Mammary epithelial cell (primary cell): ENCODE measurements at regions of chr14 and their contacts with region 1.

Region 1: GRCh38 chr14:73392329-73393257 is 65.8 kb downstream of the NUMB start:
- DNase-seq: no peak
- H3K4me3 ChIP-seq: no peak overlapping the region
- H3K27ac ChIP-seq: no peak overlapping the region
- H3K4me1 ChIP-seq: no peaks in the 10 kb centered on the region
- H3K27me3 ChIP-seq: no peaks in the 10 kb centered on the region
- CTCF ChIP-seq: no peak

Region 2: DNA sequence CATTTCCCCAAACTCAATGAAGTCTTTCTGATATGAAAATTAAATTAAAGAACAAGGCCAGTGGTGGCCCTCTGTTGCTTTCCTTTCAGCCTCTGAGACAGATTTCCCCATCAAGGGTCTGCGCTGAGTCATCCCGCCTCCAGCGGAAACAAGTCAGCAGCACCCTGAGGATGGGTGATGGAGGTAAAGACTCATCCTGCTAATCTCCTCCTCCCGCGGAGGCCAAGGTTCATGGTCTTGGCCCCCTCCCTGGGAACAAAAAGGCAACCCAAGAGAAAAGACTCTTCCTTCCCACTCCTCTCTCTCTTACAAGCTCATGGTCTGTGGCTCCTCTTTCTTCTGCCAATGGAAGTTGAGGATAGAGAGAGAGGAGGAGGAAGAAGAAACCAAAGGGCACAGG is 74.8 kb after region 1 on chr14:
- CTCF ChIA-PET with region 1: no interaction called
- dilution Hi-C with region 1: loop called (anchors 5 kb)
- in situ Hi-C with region 1: no loop called
- intact Hi-C with region 1: no loop called
- DNase-seq: no peak
- H3K4me3 ChIP-seq: no peak overlapping the region
- H3K27ac ChIP-seq: no peak overlapping the region
- H3K4me1 ChIP-seq: peaks cover 27% of the 10 kb centered on the region
- H3K27me3 ChIP-seq: no peaks in the 10 kb centered on the region
- CTCF ChIP-seq: no peak

Region 3: DNA sequence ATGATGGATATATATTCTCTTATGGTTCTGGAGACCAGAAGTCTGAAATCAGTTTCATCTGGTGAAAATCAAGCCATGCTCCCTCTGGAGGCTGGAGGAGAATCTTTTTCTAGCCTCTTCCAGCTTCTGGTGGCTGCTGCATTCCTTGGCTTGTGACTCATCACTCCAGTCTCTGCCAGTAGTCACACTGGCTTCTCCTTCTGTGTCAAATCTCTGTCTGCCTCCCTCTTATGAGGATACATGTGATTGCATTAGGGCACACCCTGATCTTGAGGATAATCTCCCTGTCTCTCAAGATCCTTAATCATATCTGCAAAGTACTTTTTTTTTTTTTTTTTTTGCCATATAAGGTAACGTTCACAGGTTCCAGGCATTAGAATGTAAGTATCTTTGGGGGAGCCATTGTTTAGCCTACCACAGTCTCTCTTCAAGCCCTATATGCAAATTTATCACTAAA is 269.9 kb after region 1 on chr14:
- CTCF ChIA-PET with region 1: no interaction called
- dilution Hi-C with region 1: no loop called
- in situ Hi-C with region 1: no loop called
- intact Hi-C with region 1: no loop called
- DNase-seq: peak; percentile 95
- H3K4me3 ChIP-seq: no peak overlapping the region
- H3K27ac ChIP-seq: no peak overlapping the region
- H3K4me1 ChIP-seq: peaks cover 9% of the 10 kb centered on the region
- H3K27me3 ChIP-seq: no peaks in the 10 kb centered on the region
- CTCF ChIP-seq: peak; percentile 48 to 58